Ascending aorta (tissue), 2 donors: ENCODE measurements at regions of chr10 and their contacts with region 1.

Region 1: GRCh38 chr10:97318772-97319651 is at the start of gene FRAT1:
- DNase-seq: peak; percentile 44 to 93
- H3K4me3 ChIP-seq: peak within 1 kb of the TSS; percentile 85 to 95
- H3K27ac ChIP-seq: peak within 1 kb of the TSS; percentile 91 to 94
- H3K4me1 ChIP-seq: peaks cover 4 to 8% of the 10 kb centered on the region in 2 donors
- H3K27me3 ChIP-seq: no peaks in the 10 kb centered on the region
- CTCF ChIP-seq: peak in 1 of 3 experiments; percentile 26
- total RNA-seq, gene FRAT1: 5.2 TPM

Region 2: DNA sequence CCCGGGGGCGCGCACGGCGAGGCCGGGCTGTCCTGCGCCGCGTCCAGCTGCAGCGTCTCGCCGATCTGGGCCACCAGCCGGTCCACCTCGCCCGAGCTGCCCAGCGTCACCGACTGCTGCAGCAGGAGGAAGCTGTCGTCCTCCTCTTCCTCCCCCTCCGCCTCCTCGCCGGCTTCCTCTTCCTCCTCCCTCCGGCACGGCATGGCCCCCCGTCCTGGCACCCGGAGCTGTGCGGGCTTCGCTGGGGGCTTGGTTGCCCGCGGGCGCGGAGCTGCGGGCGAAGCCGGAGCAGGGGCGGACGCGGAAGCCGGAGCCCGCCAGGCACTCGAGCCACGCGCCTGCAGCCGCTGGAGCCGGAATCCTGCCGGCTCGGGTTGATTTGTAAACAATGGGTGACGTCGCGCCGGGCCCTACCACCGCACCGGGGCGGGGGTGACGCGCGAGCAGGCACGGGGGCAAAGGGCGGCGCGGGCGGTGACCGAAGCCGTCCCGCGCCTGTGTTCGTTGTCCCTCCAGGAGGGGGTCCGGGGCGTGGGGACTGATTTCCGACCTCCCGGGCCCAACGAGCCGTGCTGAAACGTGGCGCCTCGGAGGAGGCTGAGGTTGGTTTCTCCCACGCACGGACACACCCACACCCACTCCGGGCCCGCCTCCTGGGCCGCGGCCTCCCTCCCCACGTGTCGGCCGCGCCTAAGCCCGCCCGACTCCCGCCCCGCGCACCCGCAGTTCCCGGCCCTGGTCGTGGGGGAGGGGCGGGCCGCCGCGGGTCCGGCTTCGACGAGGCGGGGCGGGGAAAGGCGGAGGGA is 15.6 kb after region 1 on chr10 and contains the start of gene FRAT2:
- intact Hi-C with region 1: loop called (anchors 1 kb)
- DNase-seq: peak; percentile 61 to 94
- H3K4me3 ChIP-seq: peak within 1 kb of the TSS; percentile 73 to 98
- H3K27ac ChIP-seq: peak within 1 kb of the TSS; percentile 87 to 96
- H3K4me1 ChIP-seq: peaks cover 6 to 39% of the 10 kb centered on the region in 2 donors
- H3K27me3 ChIP-seq: no peaks in the 10 kb centered on the region
- CTCF ChIP-seq: no peak
- total RNA-seq, gene FRAT2: 32.0 TPM

Region 3: DNA sequence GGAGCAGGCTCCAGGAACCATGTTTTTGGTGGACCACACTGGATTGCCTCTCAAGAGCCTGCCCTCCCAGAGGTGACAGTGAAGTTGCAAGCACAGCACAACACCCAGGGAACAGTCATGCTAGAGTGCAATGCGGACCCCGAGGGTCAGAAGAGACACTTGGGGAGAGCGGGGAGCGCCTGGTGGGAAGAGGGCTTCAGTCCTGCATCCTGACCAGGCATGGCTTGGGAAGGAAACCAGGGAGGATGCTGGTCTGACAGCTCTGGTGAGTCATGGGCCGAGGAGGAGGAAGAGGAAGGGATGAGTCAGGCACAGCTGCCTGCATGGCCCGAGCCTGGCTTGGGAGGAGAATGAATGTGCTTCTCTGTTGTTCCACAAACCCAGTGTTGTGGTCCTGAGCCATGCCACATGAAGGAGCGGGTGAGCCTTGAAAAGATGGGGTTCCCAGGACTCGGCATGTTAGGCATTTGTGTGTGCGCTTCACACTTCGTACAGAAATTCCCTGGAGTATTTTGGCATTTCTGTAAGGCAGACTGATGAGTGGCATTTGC is 224.1 kb after region 1 on chr10:
- intact Hi-C with region 1: no loop called
- DNase-seq: peak; percentile 84 to 95
- H3K4me3 ChIP-seq: no peak overlapping the region
- H3K27ac ChIP-seq: peak overlapping the region; percentile 95 to 97
- H3K4me1 ChIP-seq: peaks cover 15 to 52% of the 10 kb centered on the region in 2 donors
- H3K27me3 ChIP-seq: no peaks in the 10 kb centered on the region
- CTCF ChIP-seq: no peak